A549 (cell line): ENCODE measurements at regions of chr7 and their contacts with region 1.

Region 1: DNA sequence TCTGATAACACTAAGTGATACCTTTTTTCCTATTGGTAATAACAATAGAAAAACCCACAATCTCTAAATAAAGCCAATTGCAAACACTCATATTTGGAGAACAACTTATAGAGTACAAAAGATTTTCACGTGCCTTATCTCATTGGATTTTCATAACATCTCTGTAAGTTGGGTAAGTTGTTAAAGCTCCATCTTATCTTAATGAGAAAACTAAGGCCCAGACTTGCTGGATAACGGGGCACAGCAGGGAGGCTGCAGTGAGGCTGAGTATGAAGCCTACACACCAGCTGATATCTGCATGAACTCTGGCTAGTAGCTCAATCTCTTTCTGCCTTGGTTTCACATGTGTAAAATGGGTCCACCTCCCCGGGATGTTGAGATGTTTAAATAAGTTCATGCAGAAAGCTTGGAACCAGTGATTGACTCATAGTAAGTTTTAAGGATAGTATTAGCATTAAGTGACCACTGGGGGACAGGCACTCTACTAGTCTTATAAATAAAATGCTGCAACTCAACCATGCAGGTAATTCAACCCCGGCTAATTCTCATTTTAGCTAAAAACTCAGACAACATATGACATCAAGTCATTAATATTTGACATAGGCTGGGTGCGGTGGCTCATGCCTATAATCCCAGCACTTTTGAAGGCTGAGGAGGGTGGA is 26.7 kb downstream of the CPVL start:
- DNase-seq: no peak
- ATAC-seq: no peak
- H3K4me3 ChIP-seq: no peak overlapping the region
- H3K27ac ChIP-seq: no peak overlapping the region
- H3K4me1 ChIP-seq: no peaks in the 10 kb centered on the region
- CTCF ChIP-seq: no peak
- EP300 ChIP-seq: no peak
- POLR2A ChIP-seq: no peak
- RAD21 ChIP-seq: no peak

Region 2: DNA sequence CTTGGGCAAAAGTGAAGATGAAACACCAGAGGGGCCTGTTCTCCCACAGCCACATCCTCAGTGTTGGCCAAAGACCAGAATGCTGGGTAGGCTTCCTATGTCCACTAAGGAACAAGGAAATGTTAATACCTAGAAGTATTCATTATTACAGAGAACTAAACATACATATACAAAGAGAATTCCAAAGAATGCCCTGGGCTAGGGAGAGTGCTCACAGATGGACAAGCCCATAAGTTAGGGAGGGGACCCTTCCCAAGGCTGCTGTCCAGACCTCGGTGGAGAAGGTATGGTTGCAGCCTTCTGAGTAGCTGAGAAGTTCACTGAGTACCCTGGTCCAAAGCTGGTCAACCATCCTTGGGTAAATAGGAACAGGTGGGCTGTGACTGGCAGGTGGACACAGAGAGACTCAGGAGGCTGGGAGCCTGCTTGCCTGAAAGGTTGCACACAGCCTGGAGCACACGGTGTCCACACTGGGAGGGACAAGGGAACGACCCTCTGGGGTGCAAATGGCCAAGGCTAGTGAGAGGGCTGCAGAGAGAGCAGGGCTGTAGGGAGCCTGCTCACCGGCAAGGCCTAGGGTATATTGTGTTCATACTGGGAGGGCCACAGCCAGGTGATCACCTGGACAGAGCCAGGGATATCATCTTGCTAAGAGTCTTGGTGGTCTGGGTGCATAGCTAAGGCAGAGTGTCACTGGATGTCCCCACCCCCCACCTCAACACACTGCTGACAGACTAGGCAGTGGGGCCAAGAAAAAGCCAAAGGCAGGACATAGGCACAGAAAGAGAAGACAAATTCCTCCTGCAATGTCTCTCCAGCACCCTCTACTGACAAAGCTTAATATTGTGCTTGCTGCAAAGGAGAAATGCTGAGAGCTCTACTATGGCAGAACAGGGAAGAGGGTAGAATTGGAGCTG is 13.7 kb before region 1 on chr7:
- CTCF ChIA-PET with region 1: interaction called, 33 read pairs
- POLR2A ChIA-PET with region 1: no interaction called
- DNase-seq: peak in 1 of 2 experiments; percentile 49
- ATAC-seq: peak; percentile 90 to 91
- H3K4me3 ChIP-seq: no peak overlapping the region
- H3K27ac ChIP-seq: no peak overlapping the region
- H3K4me1 ChIP-seq: no peaks in the 10 kb centered on the region
- CTCF ChIP-seq: peak; percentile 63
- EP300 ChIP-seq: no peak
- POLR2A ChIP-seq: no peak
- RAD21 ChIP-seq: peak; percentile 59 to 74

Region 3: DNA sequence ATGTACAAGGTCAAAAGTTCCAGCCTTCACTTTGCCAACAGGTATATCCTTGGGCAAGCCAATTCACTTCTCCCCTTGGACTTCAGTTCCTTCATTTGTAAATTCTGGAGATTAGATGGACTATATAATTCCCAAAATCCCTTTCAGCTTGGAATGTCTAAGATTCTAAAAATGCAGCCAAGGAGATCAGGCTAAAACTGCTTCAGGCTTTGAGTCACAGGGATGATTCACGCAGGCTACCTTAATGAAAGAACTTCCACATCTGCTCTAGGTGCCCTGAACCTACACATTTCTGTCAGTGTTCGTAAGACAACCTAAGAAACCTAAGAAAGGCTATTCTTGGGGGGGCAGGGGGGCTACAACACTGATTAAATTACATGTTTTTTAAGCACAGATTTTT is 19.5 kb after region 1 on chr7:
- CTCF ChIA-PET with region 1: no interaction called
- POLR2A ChIA-PET with region 1: no interaction called
- DNase-seq: no peak
- ATAC-seq: no peak; a peak in 1 of 6 replicates
- H3K4me3 ChIP-seq: no peak overlapping the region
- H3K27ac ChIP-seq: no peak overlapping the region
- H3K4me1 ChIP-seq: no peaks in the 10 kb centered on the region
- CTCF ChIP-seq: no peak
- EP300 ChIP-seq: no peak
- POLR2A ChIP-seq: no peak
- RAD21 ChIP-seq: no peak

Region 4: GRCh38 chr7:29255906-29256782 is 136.5 kb after region 1 on chr7:
- CTCF ChIA-PET with region 1: no interaction called
- POLR2A ChIA-PET with region 1: no interaction called
- DNase-seq: no peak
- ATAC-seq: no peak
- H3K4me3 ChIP-seq: no peak overlapping the region
- H3K27ac ChIP-seq: no peak overlapping the region
- H3K4me1 ChIP-seq: no peaks in the 10 kb centered on the region
- CTCF ChIP-seq: no peak
- EP300 ChIP-seq: no peak
- POLR2A ChIP-seq: no peak
- RAD21 ChIP-seq: no peak